Mammary epithelial cell (primary cell): ENCODE measurements at regions of chr11 and their contacts with region 1.

Region 1: DNA sequence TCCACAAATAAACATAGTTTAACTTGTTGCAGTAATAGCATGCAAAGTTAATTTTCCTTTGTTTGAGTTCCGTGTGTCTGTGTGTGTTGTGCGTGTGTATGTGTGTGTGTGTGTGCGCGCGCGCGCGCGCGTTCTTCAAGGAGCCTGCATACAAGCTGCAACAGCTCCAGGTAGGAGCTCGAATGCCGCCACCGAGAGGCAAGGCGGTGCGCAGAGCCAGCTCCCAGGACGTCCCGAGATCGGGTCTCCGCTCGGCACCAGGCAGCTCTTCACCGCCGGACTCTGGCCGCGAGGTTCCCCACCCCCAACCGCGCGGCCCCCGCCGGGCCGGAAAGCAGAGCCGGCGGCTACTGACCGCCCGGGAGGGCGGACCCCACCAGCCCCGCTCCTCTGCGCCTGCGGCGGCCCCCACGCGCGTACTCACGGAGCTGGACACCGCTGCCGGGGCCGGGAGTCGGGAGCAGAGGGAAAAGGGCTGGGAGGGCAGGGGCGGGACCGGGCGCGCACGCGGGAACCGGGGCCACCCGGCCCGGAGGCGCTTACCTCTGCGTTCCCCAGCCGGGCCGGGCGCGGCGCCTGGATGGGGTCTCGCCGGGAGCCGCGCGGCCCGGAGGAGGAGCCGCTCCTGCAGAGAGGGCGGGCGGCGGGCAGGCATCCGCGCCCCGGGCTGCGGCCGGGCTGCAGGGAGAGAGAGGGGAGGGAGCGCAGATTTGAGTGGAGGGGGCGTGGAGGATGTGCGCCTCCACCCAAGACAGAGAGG is 40.4 kb upstream of the AKIP1 start:
- DNase-seq: peak; percentile 74
- H3K4me3 ChIP-seq: peak overlapping the region; percentile 49 to 78 (median 76)
- H3K27ac ChIP-seq: peak overlapping the region; percentile 6
- H3K4me1 ChIP-seq: peaks cover 13% of the 10 kb centered on the region
- H3K27me3 ChIP-seq: no peaks in the 10 kb centered on the region
- CTCF ChIP-seq: peak in 1 of 2 donors; percentile 16

Region 2: DNA sequence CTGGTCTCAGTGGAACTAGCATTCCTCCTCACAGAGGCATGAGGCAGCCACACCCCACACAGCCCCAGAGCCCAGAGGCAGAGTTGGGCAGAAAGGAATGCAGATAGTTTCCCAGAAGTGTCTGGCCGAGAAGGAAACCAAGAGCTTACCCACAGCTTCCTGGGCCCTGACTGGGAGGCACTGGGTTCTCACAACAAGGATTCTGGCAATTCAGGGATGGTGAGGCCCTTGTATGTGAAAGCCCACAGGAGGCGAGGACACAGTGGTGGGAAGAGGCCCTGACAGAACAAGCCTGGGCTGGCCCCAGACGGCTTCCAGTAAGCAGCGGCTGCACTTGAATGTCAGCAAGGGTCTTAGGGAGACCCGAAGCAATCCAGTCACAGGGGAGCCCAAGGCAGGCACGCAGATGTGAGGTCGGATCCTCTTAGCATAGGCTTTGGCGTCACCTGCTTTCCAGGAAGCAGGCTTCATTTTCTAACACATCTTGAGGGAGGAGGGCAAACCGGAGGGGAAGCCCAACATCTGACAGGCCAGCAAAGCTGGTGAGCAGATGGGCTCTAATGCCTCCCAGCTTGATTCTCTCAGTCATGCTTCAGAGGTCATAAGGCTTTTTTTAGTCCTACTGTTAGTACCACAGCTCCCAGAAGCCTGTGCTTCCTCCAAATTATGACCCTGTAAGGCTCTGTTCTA is 37.9 kb before region 1 on chr11:
- CTCF ChIA-PET with region 1: no interaction called
- dilution Hi-C with region 1: no loop called
- in situ Hi-C with region 1: no loop called
- intact Hi-C with region 1: loop called (anchors 2 kb)
- DNase-seq: peak; percentile 90
- H3K4me3 ChIP-seq: no peak overlapping the region
- H3K27ac ChIP-seq: peak overlapping the region; percentile 76
- H3K4me1 ChIP-seq: peaks cover 33% of the 10 kb centered on the region
- H3K27me3 ChIP-seq: no peaks in the 10 kb centered on the region
- CTCF ChIP-seq: no peak

Region 3: GRCh38 chr11:8905528-8906165 is 35.1 kb after region 1 on chr11:
- CTCF ChIA-PET with region 1: interaction called, 4 read pairs
- dilution Hi-C with region 1: no loop called
- in situ Hi-C with region 1: no loop called
- intact Hi-C with region 1: loop called (anchors 1 kb)
- DNase-seq: peak; percentile 86
- H3K4me3 ChIP-seq: peak overlapping the region in 1 of 3 experiments; percentile 13
- H3K27ac ChIP-seq: peak overlapping the region; percentile 79
- H3K4me1 ChIP-seq: peaks cover 30% of the 10 kb centered on the region
- H3K27me3 ChIP-seq: no peaks in the 10 kb centered on the region
- CTCF ChIP-seq: no peak